ENCODE measurements at regions of chr2 and their contacts with region 1.

Region 1: DNA sequence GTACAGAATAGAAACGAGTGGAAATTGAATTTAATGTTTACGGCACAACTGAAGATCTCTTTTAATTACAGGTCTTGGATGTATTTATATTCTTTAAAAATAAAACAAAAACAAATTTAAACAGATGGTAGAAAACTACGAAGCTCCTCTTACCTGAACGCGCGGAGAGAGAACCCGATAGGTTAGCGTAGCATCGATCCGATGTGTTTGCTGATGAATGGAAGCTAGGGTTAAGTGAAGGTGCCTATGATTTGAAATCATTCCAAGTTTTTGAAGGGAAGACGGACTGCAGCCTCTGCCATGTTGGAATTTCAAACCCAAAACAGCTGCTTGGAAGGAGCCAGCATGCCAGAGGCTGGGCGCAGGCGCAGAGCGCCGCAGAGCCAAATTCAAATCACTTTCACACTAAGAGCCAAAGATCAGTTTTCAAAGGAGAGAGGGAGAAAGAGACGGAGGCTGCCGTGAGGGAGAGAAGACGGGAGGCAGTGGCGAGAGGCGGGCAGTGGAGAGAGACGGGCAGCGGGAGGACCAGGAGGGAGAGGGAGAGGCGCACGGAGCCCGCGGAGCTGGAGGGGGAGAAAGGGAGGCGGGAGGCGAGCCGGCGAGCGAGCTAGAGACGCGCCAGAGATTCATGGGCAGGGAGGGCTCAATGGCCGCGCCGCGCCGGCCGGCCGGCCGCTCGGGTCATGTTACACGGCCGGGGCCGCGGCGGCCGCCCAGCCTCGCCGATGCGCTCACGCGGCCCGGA is at the start of gene FIGN:
- DNase-seq: peak; percentile 82 to 93 (median 92)
- ATAC-seq: peak; percentile 90 to 92
- H3K4me3 ChIP-seq: peak within 1 kb of the TSS; percentile 98
- H3K27ac ChIP-seq: peak within 1 kb of the TSS; percentile 99
- H3K4me1 ChIP-seq: no peaks in the 10 kb centered on the region
- H3K27me3 ChIP-seq: no peaks in the 10 kb centered on the region
- total RNA-seq, gene FIGN: 9.5 to 13.8 (median 11.6) TPM

Region 2: GRCh38 chr2:163658556-163658955 is 77.3 kb before region 1 on chr2:
- intact Hi-C with region 1: loop called in 1 of 4 experiments (anchors 2 kb)
- DNase-seq: no peak
- ATAC-seq: no peak
- H3K4me3 ChIP-seq: no peak overlapping the region
- H3K27ac ChIP-seq: no peak overlapping the region
- H3K4me1 ChIP-seq: peaks cover 13% of the 10 kb centered on the region
- H3K27me3 ChIP-seq: no peaks in the 10 kb centered on the region

Region 3: DNA sequence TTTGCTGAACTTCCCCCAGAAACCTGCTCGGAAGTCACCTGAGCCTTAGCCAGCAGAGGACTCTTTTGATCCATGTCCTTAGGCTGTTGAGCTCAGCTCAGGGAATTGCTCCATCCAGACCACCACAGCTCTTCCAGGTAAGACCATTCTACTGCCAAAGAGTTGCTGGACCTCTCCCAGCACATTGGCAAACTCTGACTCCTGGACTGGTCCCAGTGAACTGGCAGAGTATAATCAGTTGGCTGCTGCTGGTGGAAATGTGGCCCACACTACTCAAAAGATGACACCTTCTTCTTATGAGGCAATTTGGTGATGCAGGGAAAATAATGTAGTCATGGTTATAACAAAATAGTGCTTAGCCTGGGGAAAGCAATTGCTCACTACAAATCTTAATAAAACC is 308.8 kb after region 1 on chr2:
- intact Hi-C with region 1: loop called in 1 of 4 experiments (anchors 10 kb)
- DNase-seq: peak; percentile 49 to 80 (median 68)
- ATAC-seq: peak; percentile 93 to 94
- H3K4me3 ChIP-seq: no peak overlapping the region
- H3K27ac ChIP-seq: no peak overlapping the region
- H3K4me1 ChIP-seq: no peaks in the 10 kb centered on the region
- H3K27me3 ChIP-seq: no peaks in the 10 kb centered on the region